Colonic mucosa (tissue), 4 donors: ENCODE measurements at regions of chr1 and their contacts with region 1.

Region 1: DNA sequence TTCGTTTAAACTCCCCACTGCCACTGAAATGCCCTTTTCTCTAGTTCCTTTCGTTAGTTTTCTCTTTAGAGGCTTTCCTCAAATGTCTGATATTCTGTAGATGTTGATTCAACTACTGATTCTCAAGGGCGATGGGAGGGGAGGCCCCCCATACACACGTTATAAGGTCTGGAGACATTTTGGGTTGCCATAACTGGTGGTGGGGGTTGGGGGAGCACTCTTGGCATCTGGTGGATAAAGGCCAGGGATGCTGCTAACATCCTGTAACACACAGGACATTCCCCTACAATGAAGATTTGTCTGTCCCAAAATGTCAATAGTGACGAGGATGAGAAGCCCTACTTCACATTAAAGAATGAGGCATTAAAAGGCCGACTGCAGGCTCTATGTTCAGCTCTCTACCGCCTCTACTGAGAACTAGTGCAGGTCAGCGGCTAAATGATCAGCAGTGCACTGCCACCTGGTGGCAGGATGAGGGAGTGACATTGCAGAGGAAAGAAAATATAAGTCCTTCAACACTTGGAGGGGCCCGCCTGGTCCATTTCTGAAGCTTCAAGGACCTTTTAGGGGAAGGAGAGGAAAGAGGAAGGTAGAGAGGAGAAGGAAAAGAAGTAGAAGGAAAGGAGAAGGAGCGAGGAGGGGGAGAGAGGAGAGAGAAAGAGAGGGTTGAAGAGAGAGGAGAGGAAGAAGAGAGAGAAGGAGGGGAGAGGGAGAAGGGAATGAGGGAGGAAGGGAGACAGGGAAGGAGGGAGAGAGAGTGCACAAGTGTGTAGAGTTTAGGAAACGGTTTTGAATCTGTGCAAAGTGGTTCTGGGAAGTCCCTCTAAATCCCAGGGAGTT is 29.4 kb downstream of the ALG14 start:
- DNase-seq: peak; percentile 86
- H3K4me3 ChIP-seq: no peak overlapping the region
- H3K27ac ChIP-seq: peak overlapping the region; percentile 16
- H3K4me1 ChIP-seq: no peaks in the 10 kb centered on the region
- H3K27me3 ChIP-seq: no peaks in the 10 kb centered on the region
- CTCF ChIP-seq: peak; percentile 97

Region 2: DNA sequence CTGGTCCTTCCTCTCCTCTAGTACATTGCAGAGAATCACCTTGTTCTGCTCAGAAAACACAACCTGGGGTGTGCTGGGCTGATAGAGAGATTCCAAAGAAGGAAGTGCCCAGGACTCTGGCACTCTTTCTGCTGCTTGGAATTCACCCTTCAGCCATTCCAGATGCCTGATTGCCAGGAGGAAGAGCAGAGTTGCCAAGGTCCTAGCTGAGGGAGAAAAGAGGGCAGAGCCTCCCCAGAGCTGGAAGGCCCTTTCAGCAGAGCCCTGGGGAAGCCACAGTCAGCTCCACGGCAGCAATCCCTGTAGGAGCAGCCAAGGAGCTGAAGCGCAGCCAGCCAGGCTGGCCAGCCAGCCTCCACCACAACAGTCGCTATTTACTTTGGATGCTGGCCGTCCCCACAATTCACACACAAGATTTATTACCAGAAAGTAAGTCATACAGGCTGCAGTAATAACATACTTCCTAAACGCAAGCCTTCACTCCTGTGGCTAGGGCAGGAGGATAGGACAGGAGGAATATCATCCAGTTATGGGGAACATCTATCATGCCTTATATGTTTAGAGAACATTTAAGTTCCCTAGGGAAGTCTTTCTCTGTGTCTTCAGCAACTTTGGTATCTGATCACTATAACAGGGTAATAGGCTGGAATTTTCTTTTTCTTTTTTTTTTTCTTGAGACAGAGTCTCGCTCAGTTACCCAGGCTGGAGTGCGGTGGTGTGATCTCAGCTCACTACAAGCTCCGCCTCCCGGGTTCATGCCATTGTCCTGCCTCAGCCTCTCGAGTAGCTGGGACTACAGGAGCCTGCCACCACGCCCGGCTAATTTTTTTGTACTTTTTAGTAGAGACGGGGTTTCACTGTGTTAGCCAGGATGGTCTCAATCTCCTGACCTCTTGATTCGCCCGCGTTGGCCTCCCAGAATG is 259.8 kb before region 1 on chr1:
- intact Hi-C with region 1: no loop called
- DNase-seq: peak; percentile 70
- H3K4me3 ChIP-seq: no peak overlapping the region
- H3K27ac ChIP-seq: peak overlapping the region; percentile 78
- H3K4me1 ChIP-seq: peaks cover 10% of the 10 kb centered on the region
- H3K27me3 ChIP-seq: no peaks in the 10 kb centered on the region
- CTCF ChIP-seq: no peak

Region 3: DNA sequence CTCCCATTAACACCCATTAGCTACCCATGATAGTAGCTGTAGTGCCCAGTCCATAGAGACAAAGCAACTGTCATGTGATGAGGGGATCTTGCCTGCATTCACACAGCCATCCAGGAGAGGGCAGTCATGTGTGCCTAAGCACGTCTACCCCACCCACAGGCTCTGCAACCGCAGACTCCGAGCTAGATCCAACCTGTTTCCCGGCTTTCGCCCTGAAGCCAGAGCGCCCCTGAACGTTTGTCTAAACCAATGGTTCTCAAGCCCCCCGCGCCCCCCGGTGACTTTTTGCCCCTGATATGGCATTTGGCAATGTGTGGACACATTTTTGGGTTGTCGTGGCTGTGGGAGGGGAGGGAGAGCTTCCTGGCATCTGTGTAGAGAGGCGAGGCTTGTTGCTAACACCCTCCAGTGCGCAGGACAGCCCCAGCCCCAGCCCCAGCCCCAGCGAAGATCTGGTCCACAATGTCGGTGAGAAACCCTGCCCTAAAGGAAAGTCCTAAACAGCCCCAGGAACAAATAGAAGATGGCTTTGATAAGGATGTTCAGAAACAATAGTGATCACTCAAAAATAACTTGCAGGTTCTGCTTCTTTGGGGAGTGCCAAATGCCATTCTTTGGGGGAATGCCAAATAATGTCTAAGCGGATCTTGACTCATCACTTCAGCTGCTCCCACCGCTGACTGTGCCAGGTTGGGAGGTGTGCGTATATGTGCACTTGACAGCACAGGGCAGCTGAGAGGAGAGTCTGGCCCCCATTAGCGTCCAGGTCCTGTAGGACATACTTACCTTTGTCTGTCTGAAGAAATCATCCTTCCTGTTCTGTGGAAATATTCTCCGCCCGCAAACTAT is 188.7 kb before region 1 on chr1:
- intact Hi-C with region 1: loop called (anchors 2 kb)
- DNase-seq: peak; percentile 92
- H3K4me3 ChIP-seq: peak overlapping the region; percentile 23
- H3K27ac ChIP-seq: peak overlapping the region; percentile 57
- H3K4me1 ChIP-seq: peaks cover 7% of the 10 kb centered on the region
- H3K27me3 ChIP-seq: no peaks in the 10 kb centered on the region
- CTCF ChIP-seq: peak; percentile 57

Region 4: GRCh38 chr1:94949681-94950661 is 93.4 kb before region 1 on chr1:
- intact Hi-C with region 1: no loop called
- DNase-seq: peak; percentile 59
- H3K4me3 ChIP-seq: no peak overlapping the region
- H3K27ac ChIP-seq: no peak overlapping the region
- H3K4me1 ChIP-seq: peaks cover 9% of the 10 kb centered on the region
- H3K27me3 ChIP-seq: no peaks in the 10 kb centered on the region
- CTCF ChIP-seq: no peak